Dorsolateral prefrontal cortex (tissue), 120 donors: ENCODE measurements at regions of chr9 and their contacts with region 1.

Region 1: GRCh38 chr9:83920927-83921707 is at the start of gene KIF27:
- DNase-seq: peak; percentile 95 to 99 (median 98)
- H3K4me3 ChIP-seq: peak within 1 kb of the TSS; percentile 56 to 93 (median 80)
- H3K27ac ChIP-seq: peak within 1 kb of the TSS in 57 of 59 donors; percentile 16 to 92 (median 81)
- H3K27me3 ChIP-seq: no peaks in the 10 kb centered on the region
- CTCF ChIP-seq: peak in 51 of 56 donors; percentile 1 to 64 (median 35)
- total RNA-seq, gene KIF27: 6.9 to 17.8 (median 12.2) TPM

Region 2: GRCh38 chr9:83219152-83219923 is 701.8 kb before region 1 on chr9:
- intact Hi-C with region 1: loop called in 1 of 2 experiments (anchors 10 kb)
- DNase-seq: peak; percentile 46 to 89 (median 74)
- H3K4me3 ChIP-seq: peak overlapping the region; percentile 49 to 85 (median 66)
- H3K27ac ChIP-seq: peak overlapping the region in 23 of 59 donors; percentile 7 to 76 (median 45)
- H3K27me3 ChIP-seq: no peaks in the 10 kb centered on the region
- CTCF ChIP-seq: peak in 51 of 56 donors; percentile 7 to 82 (median 60)

Region 3: DNA sequence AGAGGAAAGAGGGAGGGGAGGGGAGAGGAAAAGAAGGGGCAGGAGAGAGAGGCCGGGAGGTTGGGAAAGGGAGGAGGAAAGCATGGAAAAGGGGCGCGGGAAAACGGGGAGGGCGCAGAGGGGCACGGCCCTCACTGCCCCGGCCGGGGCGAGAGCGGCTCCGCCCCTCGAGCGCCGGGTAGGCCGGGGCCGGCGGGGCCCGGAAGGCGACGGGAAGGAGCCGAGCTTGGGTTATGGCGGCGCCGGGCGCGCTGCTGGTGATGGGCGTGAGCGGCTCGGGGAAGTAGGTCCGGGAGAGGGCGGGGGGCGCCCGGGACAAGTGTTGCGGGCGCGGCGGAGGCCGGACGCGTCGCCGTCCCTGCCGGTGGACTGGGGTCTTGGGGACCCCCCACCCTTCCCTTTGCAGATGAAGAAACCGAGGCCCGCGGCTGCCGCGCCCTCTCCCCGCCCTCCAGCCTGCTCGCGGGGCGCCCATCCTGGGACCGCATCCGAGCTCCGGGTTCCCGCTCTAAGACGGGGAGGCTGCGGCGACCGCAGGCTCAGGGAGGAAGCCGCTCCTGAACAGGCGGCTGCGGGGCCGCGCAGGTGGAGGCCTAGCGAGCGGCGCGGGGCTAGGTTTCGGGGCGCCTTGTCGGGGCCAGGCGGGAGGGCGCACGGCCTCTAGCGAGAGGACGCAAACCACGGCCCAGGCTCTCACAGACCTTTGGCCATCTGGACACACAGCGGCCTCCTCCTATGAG is 298.0 kb before region 1 on chr9 and contains the start of gene IDNK:
- intact Hi-C with region 1: loop called in 1 of 2 experiments (anchors 5 kb)
- DNase-seq: peak; percentile 28 to 75 (median 55)
- H3K4me3 ChIP-seq: peak within 1 kb of the TSS; percentile 52 to 97 (median 89)
- H3K27ac ChIP-seq: peak within 1 kb of the TSS; percentile 72 to 99 (median 96)
- H3K27me3 ChIP-seq: no peaks in the 10 kb centered on the region
- CTCF ChIP-seq: peak in 10 of 56 donors; percentile 4 to 41 (median 13)
- total RNA-seq, gene IDNK: 3.8 to 21.4 (median 11.5) TPM

Region 4: DNA sequence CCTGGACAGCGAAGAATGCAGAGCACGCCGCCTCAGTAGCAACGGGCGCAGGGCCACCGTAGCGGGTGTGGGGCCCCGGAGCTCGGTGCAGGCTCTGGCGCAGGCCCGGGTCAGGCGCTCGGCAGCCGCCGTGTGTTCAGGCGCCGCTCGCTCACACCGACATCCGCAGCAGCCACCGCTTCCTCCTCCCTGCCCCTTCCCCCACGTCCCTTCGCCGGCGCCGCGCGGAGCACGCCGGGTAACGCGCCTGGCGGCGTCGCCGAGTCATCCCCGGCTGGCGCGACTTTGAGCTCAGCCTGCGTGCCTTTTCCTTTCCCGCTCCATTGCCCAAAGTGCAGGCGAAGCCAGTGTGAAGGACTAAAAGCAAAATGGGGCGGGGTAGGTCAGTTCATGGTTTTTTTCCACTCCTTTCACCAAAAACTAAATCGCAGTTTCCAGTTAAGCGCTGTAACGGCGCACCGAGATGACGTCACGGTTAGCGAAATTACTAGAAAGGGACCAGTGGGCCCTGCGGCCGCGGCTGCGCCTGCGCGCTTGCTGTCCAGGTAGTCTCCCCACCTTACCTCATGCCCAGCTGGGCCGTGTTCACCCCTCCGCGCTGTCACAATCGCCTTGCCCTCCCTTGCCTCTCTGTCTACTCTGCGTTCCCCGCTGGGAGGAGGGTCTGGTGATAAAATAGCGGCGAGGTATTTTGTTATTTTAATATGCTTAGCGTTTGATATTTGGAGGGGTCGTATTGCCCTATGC is 213.2 kb before region 1 on chr9 and contains the start of gene UBQLN1:
- intact Hi-C with region 1: loop called in 1 of 2 experiments (anchors 5 kb)
- DNase-seq: peak; percentile 84 to 91 (median 89)
- H3K4me3 ChIP-seq: peak within 1 kb of the TSS; percentile 68 to 100 (median 98)
- H3K27ac ChIP-seq: peak within 1 kb of the TSS; percentile 94 to 100 (median 100)
- H3K27me3 ChIP-seq: no peaks in the 10 kb centered on the region
- CTCF ChIP-seq: peak in 18 of 56 donors; percentile 3 to 42 (median 18)
- total RNA-seq, gene UBQLN1: 109 to 237 (median 183) TPM

Region 5: DNA sequence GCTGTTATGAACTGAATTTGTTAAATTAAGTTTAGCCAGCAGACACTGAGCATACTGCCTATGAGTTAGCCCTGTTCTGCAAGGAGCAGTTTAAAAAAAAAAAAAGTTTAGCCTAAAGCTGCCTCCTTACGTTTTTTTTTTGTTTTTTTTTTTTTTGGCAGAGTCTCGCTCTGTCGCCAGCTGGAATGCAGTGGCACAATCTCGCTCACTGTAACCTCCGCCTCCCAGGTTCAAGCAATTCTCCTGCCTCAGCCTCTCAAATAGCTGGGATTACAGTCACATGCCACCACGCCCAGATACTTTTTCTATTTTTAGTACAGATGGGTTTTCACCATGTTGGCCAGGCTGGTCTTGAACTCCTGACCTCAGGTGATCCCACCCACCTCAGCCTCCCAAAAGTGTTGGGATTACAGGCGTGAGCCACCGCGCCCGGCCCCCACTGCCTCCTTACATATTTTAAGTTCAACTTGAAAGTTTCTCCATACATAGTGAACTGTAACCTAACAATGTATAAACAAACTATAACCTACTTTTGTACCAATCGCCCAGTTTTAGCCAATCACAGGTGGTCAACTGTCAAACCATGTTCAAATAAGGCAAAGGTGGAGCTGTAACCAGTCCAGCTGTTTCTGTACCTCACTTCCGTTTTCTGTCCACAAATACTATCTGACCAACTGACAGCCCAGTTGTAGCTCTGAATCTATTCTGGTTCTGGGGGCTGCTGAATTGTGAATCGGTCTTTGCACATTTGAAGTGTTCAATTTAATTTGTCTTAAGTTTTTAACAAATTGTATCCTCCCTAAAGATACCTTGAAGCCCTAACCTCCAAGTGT is 120.7 kb before region 1 on chr9:
- intact Hi-C with region 1: no loop called
- DNase-seq: no peak
- H3K4me3 ChIP-seq: no peak overlapping the region
- H3K27ac ChIP-seq: no peak overlapping the region
- H3K27me3 ChIP-seq: no peaks in the 10 kb centered on the region
- CTCF ChIP-seq: no peak

Region 6: DNA sequence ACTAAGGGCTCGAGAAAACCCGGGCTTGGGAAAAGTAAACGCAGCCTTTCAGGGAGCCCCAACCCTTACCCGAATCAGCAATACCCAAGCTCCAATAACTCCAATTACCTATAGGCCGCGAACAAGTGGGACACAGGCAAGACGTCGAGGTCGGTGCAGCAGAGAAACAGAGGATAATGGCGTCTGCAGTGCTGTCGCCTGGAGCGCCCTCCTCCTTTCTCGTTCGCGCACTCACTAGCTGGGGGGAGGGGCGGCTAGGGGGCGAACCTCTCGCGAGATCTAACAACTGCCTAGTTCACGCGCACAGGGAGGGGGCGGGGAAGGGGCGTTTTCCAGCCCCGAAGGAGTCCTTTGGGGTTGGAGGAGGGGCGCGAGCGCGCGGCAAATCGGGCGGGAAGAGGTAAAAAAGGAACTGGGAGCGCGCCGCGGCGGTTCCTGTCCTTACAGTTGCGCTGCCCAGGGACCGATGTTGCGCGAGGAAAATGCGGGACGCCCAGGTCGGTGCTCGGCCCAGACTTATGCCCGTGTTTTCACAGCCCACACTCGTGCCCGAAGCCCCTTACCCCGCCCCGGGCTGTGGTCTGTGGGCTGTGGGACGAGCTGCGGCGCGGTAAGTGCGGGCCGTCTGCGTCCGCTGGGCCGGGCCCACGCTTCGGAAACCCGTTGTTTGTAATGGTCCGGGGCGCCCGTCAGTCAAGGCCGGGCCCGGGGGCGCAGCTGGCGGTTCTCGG is 59.4 kb after region 1 on chr9 and contains the start of gene RMI1:
- intact Hi-C with region 1: loop called (anchors 1 to 2 kb)
- DNase-seq: peak; percentile 93 to 99 (median 98)
- H3K4me3 ChIP-seq: peak within 1 kb of the TSS; percentile 69 to 99 (median 93)
- H3K27ac ChIP-seq: peak within 1 kb of the TSS; percentile 94 to 100 (median 99)
- H3K27me3 ChIP-seq: no peaks in the 10 kb centered on the region
- CTCF ChIP-seq: peak in 49 of 56 donors; percentile 18 to 70 (median 49)
- total RNA-seq, gene RMI1: 5.5 to 13.7 (median 9.1) TPM

Region 7: GRCh38 chr9:84261082-84261746 is 340.1 kb after region 1 on chr9:
- intact Hi-C with region 1: loop called in 1 of 2 experiments (anchors 5 kb)
- DNase-seq: peak; percentile 68 to 89 (median 84)
- H3K4me3 ChIP-seq: peak overlapping the region in 42 of 59 donors; percentile 0 to 57 (median 35)
- H3K27ac ChIP-seq: peak overlapping the region in 1 of 59 donors; percentile 28
- H3K27me3 ChIP-seq: peaks cover 0 to 10% (median 0%) of the 10 kb centered on the region in 45 donors
- CTCF ChIP-seq: peak; percentile 77 to 99 (median 93)